T-cell (primary cell): ENCODE measurements at regions of chr16 and their contacts with region 1.

Region 1: DNA sequence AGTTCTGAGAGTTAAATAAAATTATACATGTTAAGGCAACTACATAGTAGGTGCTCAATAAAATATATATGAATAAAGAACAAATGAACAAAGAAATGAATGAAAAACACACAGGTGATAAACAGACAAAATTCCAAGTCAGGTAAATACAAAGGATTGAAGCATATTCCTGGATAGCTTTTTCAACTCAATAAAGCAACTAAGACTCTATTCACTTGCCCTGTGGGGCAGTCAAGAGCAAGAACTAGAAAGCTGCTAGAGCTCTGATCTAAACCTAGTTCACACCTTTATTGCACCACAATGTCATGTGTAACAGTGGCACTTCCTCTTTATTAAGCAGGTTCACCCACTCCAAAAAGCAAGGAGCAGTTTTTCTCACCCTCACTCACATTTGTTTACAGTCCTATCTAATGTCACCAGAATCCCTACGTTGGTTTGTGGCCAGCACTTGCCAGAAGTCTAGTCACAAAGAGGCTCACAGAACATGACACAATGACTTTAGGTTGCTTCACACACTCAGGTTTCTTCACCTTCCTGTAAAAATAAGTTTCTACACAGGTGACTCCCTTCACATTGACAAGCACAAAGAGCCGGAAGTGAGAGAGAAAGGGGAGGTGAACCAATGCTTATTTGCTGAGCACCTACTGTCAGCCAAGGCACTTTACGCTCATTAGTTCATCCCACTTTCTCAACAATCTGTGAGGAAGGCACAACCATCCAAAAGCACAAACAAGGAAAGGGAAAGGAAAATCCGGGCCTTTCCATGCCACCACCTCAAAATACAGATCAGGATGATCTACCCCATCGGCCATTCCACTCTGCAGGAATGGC is 70.8 kb downstream of the XPO6 start:
- DNase-seq: peak; percentile 51 to 94 (median 78)
- ATAC-seq: peak; percentile 77 to 81 (median 77)
- H3K4me3 ChIP-seq: peak overlapping the region; percentile 1 to 38
- H3K4me3 Mint-ChIP-seq: peak overlapping the region; percentile 71 to 80 (median 75)
- H3K27ac ChIP-seq: peak overlapping the region; percentile 94
- H3K27ac Mint-ChIP-seq: peak overlapping the region; percentile 86 to 98
- H3K4me1 ChIP-seq: peaks cover 70 to 77% of the 10 kb centered on the region in 2 experiments
- H3K4me1 Mint-ChIP-seq: peaks cover 94 to 95% (median 94%) of the 10 kb centered on the region in 3 donors
- H3K27me3 ChIP-seq: no peaks in the 10 kb centered on the region
- H3K27me3 Mint-ChIP-seq: no peaks in the 10 kb centered on the region

Region 2: GRCh38 chr16:28188085-28188916 is 47.3 kb after region 1 on chr16:
- CTCF ChIA-PET with region 1: interaction called, 7 to 12 read pairs
- POLR2A ChIA-PET with region 1: interaction called, 4 to 5 read pairs
- DNase-seq: peak in 1 of 35 experiments; percentile 26
- ATAC-seq: no peak
- H3K4me3 ChIP-seq: no peak overlapping the region
- H3K4me3 Mint-ChIP-seq: peak overlapping the region; percentile 46 to 67 (median 51)
- H3K27ac ChIP-seq: peak overlapping the region; percentile 75
- H3K27ac Mint-ChIP-seq: peak overlapping the region; percentile 89 to 93
- H3K4me1 ChIP-seq: peaks cover 64 to 67% of the 10 kb centered on the region in 2 experiments
- H3K4me1 Mint-ChIP-seq: peaks cover 93 to 95% (median 94%) of the 10 kb centered on the region in 3 donors
- H3K27me3 ChIP-seq: no peaks in the 10 kb centered on the region
- H3K27me3 Mint-ChIP-seq: no peaks in the 10 kb centered on the region

Region 3: GRCh38 chr16:28193530-28194423 is 52.8 kb after region 1 on chr16:
- CTCF ChIA-PET with region 1: interaction called, 7 to 12 read pairs
- POLR2A ChIA-PET with region 1: interaction called, 4 to 5 read pairs
- DNase-seq: peak in 6 of 35 experiments; percentile 11 to 65 (median 30)
- ATAC-seq: peak; percentile 34 to 50 (median 38)
- H3K4me3 ChIP-seq: peak overlapping the region; percentile 39 to 56
- H3K4me3 Mint-ChIP-seq: peak overlapping the region; percentile 62 to 75 (median 74)
- H3K27ac ChIP-seq: peak overlapping the region; percentile 86
- H3K27ac Mint-ChIP-seq: peak overlapping the region; percentile 96 to 98
- H3K4me1 ChIP-seq: peaks cover 53 to 59% of the 10 kb centered on the region in 2 experiments
- H3K4me1 Mint-ChIP-seq: peaks cover 79 to 86% (median 85%) of the 10 kb centered on the region in 3 donors
- H3K27me3 ChIP-seq: no peaks in the 10 kb centered on the region
- H3K27me3 Mint-ChIP-seq: no peaks in the 10 kb centered on the region

Region 4: DNA sequence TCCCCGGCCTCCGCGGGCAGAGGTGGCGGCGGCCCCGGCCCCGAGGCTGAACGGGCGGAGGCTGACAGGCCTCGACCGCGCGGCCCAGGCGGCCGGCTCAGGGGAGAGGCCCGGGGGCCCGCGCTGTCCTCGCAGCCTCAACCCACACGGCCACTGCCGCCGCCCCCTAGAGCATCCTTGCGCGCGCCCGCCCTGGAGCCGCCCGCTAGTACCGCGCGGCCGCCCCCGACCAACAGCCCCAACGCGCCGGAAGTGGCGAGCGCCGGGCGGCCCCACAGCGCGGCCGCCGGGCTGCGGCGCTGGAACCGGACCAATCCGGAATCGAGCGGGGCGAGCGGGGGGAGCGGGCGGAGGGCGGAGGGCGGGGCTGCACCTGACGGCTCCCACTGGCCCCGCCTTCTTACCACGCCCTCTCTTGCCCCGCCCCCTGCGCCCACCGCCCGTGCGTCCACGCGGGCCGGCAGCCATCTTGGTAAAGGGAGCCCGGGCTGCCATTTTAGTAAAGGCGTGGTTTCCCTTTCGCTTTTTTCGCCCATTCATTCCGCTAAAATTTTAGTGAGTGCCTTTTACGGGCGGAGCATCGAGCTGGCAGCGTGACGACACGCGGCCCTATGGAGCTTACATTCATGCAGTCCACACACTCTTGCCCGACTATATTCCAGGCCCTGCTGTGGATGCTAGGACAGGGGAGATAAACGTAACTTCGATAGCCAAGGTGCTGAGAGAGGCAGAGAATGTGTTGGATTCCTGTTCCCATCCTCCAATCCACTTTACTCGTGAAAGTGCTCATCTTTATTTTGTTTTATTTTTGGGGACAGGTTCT is 70.9 kb after region 1 on chr16 and contains the start of gene XPO6:
- CTCF ChIA-PET with region 1: interaction called, 31 to 99 read pairs
- POLR2A ChIA-PET with region 1: interaction called in 1 of 2 experiments, 3 read pairs
- DNase-seq: peak; percentile 91 to 99 (median 98)
- ATAC-seq: peak; percentile 84 to 90 (median 86)
- H3K4me3 ChIP-seq: peak within 1 kb of the TSS; percentile 89 to 93
- H3K4me3 Mint-ChIP-seq: peak within 1 kb of the TSS; percentile 78 to 90 (median 86)
- H3K27ac ChIP-seq: peak within 1 kb of the TSS; percentile 60
- H3K27ac Mint-ChIP-seq: peak within 1 kb of the TSS; percentile 89 to 91
- H3K4me1 ChIP-seq: peaks cover 24 to 39% of the 10 kb centered on the region in 2 experiments
- H3K4me1 Mint-ChIP-seq: peaks cover 29 to 40% (median 37%) of the 10 kb centered on the region in 3 donors
- H3K27me3 ChIP-seq: no peaks in the 10 kb centered on the region
- H3K27me3 Mint-ChIP-seq: no peaks in the 10 kb centered on the region
- total RNA-seq, gene XPO6: 355 to 403 (median 391) TPM

Region 5: DNA sequence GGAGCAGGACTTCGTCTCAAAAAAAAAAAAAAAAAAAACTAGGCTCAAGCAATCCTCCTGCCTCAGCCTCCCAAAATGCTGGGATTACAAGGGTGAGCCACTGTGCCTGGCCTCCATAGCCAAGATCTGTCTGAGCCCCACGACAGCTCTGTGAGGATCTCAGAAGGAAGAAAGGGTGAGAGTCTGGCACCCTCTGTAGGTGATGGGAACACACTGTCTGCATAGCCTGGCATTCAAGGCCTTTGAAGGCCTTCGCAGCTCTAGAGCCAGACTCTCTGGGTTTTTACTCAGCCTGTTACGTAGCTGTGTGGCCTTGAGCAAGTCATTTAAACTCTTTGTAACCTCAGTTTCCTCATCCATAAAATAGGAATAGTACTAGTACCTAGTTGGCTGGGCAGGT is 77.1 kb after region 1 on chr16:
- CTCF ChIA-PET with region 1: interaction called, 31 to 99 read pairs
- POLR2A ChIA-PET with region 1: interaction called, 3 to 9 read pairs
- DNase-seq: peak; percentile 36 to 87 (median 62)
- ATAC-seq: peak; percentile 98 to 100 (median 100)
- H3K4me3 ChIP-seq: no peak overlapping the region
- H3K4me3 Mint-ChIP-seq: no peak overlapping the region
- H3K27ac ChIP-seq: no peak overlapping the region
- H3K27ac Mint-ChIP-seq: peak overlapping the region in 1 of 2 donors; percentile 77
- H3K4me1 ChIP-seq: peaks cover 0 to 10% of the 10 kb centered on the region in 2 experiments
- H3K4me1 Mint-ChIP-seq: peaks cover 0 to 6% (median 2%) of the 10 kb centered on the region in 3 donors
- H3K27me3 ChIP-seq: no peaks in the 10 kb centered on the region
- H3K27me3 Mint-ChIP-seq: no peaks in the 10 kb centered on the region

Region 6: DNA sequence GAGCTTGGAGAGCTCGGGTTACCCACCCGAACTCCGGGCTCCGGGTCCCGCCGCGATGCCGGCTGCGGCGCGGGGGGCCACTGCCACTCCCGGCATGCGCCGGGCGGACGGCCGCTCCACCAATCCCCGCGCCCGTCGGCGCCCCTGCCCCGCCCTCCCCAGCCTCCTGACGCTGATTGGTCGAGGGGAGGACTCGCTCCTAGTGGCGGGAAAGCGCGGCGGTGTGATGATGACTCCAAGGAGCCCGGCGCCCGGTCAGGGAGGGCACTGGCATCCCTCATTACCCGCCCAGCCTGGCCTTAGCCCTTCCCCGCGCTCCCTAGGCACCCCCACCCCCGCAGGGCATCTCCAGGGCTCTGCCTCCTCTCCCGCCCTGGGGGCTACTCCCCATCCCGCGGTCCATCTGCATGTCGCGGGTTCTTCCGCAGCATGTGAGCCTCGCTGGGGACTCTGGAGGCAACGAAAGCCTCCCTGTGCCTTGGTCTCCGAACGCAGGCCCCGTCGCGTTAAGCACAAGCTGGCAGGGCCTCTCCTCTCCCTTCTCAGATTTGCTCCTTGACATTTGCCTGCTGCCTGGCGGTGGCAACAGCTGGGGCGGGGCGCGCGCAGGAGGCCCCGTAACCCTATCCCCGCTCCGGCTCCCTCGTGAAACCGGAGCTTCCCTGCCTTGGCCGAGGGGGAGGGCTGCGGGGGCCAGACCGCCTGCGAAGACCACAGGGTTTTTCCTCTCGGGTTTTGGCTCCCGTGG is 739.0 kb after region 1 on chr16:
- CTCF ChIA-PET with region 1: no interaction called
- POLR2A ChIA-PET with region 1: no interaction called
- DNase-seq: peak; percentile 73 to 90 (median 83)
- ATAC-seq: peak; percentile 98 to 99 (median 99)
- H3K4me3 ChIP-seq: peak overlapping the region; percentile 78 to 94
- H3K4me3 Mint-ChIP-seq: peak overlapping the region; percentile 85 to 87 (median 86)
- H3K27ac ChIP-seq: no peak overlapping the region
- H3K27ac Mint-ChIP-seq: peak overlapping the region in 1 of 2 donors; percentile 69
- H3K4me1 ChIP-seq: peaks cover 2 to 20% of the 10 kb centered on the region in 2 experiments
- H3K4me1 Mint-ChIP-seq: peaks cover 5 to 16% (median 6%) of the 10 kb centered on the region in 3 donors
- H3K27me3 ChIP-seq: peaks cover 0 to 13% of the 10 kb centered on the region in 2 experiments
- H3K27me3 Mint-ChIP-seq: peaks cover 7% of the 10 kb centered on the region in 2 donors

Region 7: GRCh38 chr16:28984619-28985135 is 843.7 kb after region 1 on chr16 and contains the start of gene LAT:
- CTCF ChIA-PET with region 1: no interaction called
- POLR2A ChIA-PET with region 1: interaction called in 1 of 2 experiments, 12 read pairs
- DNase-seq: peak; percentile 68 to 90 (median 80)
- ATAC-seq: peak; percentile 81 to 84 (median 84)
- H3K4me3 ChIP-seq: peak within 1 kb of the TSS; percentile 92 to 99
- H3K4me3 Mint-ChIP-seq: peak within 1 kb of the TSS; percentile 95 to 99 (median 99)
- H3K27ac ChIP-seq: peak within 1 kb of the TSS; percentile 90
- H3K27ac Mint-ChIP-seq: peak within 1 kb of the TSS; percentile 97 to 98
- H3K4me1 ChIP-seq: peaks cover 27 to 70% of the 10 kb centered on the region in 2 experiments
- H3K4me1 Mint-ChIP-seq: peaks cover 46 to 62% (median 54%) of the 10 kb centered on the region in 3 donors
- H3K27me3 ChIP-seq: no peaks in the 10 kb centered on the region
- H3K27me3 Mint-ChIP-seq: no peaks in the 10 kb centered on the region
- total RNA-seq, gene LAT: 237 to 440 (median 378) TPM